SK-N-SH (cell line): ENCODE measurements at regions of chr9 and their contacts with region 1.

Region 1: GRCh38 chr9:36450110-36450732 is 50.2 kb upstream of the RNF38 start:
- DNase-seq: peak; percentile 53
- H3K4me3 ChIP-seq: no peak overlapping the region
- H3K27ac ChIP-seq: no peak overlapping the region
- H3K4me1 ChIP-seq: no peaks in the 10 kb centered on the region
- H3K27me3 ChIP-seq: no peaks in the 10 kb centered on the region
- CTCF ChIP-seq: peak; percentile 90
- EP300 ChIP-seq: no peak
- RAD21 ChIP-seq: peak; percentile 83

Region 2: DNA sequence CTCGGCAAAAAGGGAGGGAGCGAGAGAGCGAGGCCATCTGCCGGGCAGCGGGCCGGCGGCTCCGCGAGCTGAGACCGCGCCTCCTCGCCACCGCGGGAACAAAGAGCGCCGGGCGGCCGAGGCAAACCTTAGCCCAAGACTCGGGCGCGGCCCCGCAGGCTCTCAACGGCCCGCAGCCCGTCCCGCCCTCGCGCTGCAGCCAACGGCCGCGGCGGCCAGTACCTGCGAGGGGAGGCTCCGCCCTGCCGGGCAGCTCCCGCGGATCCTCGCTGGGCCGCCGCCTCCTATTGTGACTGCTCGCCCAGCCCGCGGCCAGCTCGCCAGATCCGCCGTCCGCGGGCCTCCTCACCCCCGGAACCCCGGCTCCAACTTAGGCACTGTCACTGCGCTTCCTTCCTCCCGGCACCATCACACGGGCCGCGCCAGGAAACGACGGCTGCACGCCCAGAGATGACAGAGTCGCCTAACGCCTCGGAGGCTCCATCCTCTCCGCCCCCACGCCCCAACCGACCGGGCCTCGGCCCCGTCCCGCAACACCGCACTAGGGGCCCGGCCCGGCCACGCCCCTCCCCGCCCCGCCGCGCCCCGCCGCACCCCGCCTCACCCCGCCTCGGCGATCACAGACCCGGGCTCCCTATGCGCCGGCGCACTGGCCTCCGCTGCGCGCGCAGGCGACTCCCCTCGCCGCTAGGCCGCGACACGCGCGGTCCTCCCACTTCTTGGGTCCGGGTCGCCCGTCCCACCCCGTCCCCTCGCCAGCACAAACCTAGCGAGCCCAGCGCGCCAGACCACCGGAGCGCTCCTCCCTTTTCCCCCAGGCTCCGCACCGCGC is 49.7 kb before region 1 on chr9:
- CTCF ChIA-PET with region 1: interaction called, 135 read pairs
- POLR2A ChIA-PET with region 1: no interaction called
- DNase-seq: peak; percentile 99
- H3K4me3 ChIP-seq: peak overlapping the region; percentile 77 to 84
- H3K27ac ChIP-seq: peak overlapping the region; percentile 84 to 93
- H3K4me1 ChIP-seq: peaks cover 4 to 9% of the 10 kb centered on the region in 2 experiments; a peak in 2 of 4 replicates
- H3K27me3 ChIP-seq: no peaks in the 10 kb centered on the region
- CTCF ChIP-seq: no peak
- EP300 ChIP-seq: no peak; a peak in 1 of 4 replicates
- RAD21 ChIP-seq: no peak

Region 3: DNA sequence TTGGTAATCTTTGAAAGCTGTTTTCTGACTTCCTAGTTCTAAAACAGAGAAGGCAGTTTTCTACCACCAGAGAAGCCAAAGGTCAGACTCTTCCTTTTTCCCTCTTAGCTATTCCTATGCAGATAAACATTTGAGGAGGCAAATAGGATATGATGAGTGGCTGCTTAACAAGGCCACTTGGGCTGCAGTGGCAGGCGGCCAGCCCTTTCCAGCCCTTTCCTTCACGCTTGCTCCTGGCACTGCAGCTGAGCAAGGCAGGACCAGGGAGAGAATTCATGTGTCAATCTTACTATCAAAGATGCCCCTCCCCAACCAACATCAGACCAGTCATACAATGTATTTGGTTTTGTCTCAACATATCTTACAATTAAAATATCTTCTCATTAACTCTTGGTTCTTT is 13.3 kb before region 1 on chr9:
- CTCF ChIA-PET with region 1: interaction called, 28 read pairs
- POLR2A ChIA-PET with region 1: no interaction called
- DNase-seq: no peak
- H3K4me3 ChIP-seq: no peak overlapping the region
- H3K27ac ChIP-seq: no peak overlapping the region; a peak in 1 of 4 replicates
- H3K4me1 ChIP-seq: peaks cover under 1 to 2% of the 10 kb centered on the region in 2 experiments; a peak in 2 of 4 replicates
- H3K27me3 ChIP-seq: no peaks in the 10 kb centered on the region
- CTCF ChIP-seq: no peak
- EP300 ChIP-seq: no peak
- RAD21 ChIP-seq: no peak

Region 4: DNA sequence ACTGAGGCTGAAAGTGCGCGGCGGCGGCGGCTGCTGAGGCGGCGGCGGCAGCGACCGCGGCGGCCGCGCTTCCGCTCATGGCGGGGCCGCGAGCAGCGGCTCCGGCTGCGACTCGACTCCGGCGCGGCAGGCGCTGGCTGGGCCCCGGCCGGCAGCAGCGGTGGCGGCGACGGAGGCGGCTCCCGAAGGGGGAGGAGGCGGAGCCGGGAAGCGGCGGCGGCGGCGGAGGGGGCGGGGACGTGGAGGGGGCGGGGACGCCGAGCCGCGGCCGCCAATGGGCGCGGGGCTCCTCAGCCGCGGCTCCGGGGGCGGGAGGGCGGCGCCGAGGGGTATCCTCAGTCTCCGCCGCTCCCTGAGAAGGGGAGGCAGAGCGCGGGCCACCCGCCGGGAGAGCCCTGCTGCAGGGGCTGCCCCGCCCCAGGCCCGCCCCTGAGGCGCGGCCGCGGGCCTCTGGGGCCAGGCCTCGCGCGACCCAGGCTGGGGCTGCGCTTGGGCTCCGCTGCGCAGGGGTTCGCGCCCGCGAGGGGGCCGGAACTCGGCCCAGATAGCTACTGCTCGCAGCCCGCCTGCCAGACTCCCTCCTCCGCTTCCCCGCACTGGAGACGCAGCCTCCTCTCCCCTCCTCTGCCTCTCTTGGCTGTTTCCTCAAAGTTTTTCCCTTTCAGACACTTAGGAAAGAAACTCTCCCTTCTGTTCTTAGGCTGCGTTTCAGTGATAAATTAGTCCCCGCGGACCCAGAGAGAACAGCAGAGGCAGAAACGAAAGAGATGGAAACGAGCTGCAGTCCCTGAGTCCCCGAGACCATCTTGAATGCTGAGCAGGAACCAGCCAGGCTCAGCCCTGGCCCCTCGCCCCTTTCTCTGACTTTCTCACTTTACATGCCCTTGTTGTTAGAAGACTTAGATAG is 37.5 kb after region 1 on chr9:
- CTCF ChIA-PET with region 1: interaction called, 13 read pairs
- POLR2A ChIA-PET with region 1: no interaction called
- DNase-seq: peak; percentile 96
- H3K4me3 ChIP-seq: peak overlapping the region; percentile 62 to 96
- H3K27ac ChIP-seq: peak overlapping the region; percentile 88 to 91
- H3K4me1 ChIP-seq: peaks cover 12 to 16% of the 10 kb centered on the region in 2 experiments; a peak in 3 of 4 replicates
- H3K27me3 ChIP-seq: no peaks in the 10 kb centered on the region
- CTCF ChIP-seq: no peak
- EP300 ChIP-seq: no peak
- RAD21 ChIP-seq: no peak

Region 5: DNA sequence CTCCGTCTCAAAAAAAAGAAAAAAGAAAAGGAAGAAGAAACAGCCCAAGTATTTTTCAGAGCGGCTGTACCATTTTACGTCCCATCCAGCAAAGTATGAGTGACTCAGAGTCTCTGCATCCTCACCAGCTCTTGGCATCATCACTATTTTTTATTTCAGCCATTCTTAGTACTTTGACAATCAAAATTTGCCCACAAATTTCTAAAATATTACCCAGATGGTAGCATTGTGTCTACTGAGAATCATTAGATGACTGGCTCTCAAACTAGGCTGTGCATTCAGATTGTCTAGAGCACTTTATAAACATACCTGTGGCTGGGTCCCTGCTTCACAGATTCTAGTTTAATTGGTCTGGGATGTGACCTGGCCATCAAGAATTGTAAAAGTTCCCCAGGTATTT is 100.9 kb after region 1 on chr9:
- CTCF ChIA-PET with region 1: interaction called, 27 read pairs
- POLR2A ChIA-PET with region 1: no interaction called
- DNase-seq: no peak
- H3K4me3 ChIP-seq: no peak overlapping the region
- H3K27ac ChIP-seq: peak overlapping the region in 1 of 2 experiments; percentile 37; a peak in 2 of 4 replicates
- H3K4me1 ChIP-seq: no peaks in the 10 kb centered on the region
- H3K27me3 ChIP-seq: 0 out of 2 replicates have a peak, but pooled peaks cover 8% of the 10 kb centered on the region
- CTCF ChIP-seq: no peak
- EP300 ChIP-seq: no peak
- RAD21 ChIP-seq: no peak

Region 6: DNA sequence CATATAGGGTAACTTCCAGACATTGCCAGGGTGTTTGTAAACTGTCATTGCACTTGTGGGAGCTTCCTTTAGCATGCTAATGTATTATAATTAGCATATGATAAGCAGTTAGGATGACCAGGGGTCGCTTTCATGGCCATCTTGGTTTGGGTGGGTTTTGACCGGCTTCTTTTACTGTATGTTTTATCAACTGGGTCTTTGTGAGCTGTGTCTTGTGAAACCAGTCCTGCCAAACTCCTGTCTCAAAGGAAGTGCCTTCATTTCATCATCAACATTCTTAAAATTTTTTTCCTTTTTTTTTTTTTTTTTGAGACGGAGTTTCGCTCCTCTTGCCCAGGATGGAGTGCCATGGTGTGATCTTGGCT is 110.6 kb after region 1 on chr9:
- CTCF ChIA-PET with region 1: interaction called, 27 read pairs
- POLR2A ChIA-PET with region 1: no interaction called
- DNase-seq: no peak
- H3K4me3 ChIP-seq: no peak overlapping the region
- H3K27ac ChIP-seq: no peak overlapping the region
- H3K4me1 ChIP-seq: no peaks in the 10 kb centered on the region
- H3K27me3 ChIP-seq: no peaks in the 10 kb centered on the region
- CTCF ChIP-seq: no peak
- EP300 ChIP-seq: no peak
- RAD21 ChIP-seq: no peak

Region 7: GRCh38 chr9:36828611-36829013 is 378.4 kb after region 1 on chr9:
- CTCF ChIA-PET with region 1: no interaction called
- POLR2A ChIA-PET with region 1: no interaction called
- DNase-seq: no peak
- H3K4me3 ChIP-seq: no peak overlapping the region
- H3K27ac ChIP-seq: no peak overlapping the region
- H3K4me1 ChIP-seq: no peaks in the 10 kb centered on the region; a peak in 1 of 4 replicates
- H3K27me3 ChIP-seq: peaks cover 27% of the 10 kb centered on the region; the same call in 1 of the 2 replicates
- CTCF ChIP-seq: no peak
- EP300 ChIP-seq: no peak
- RAD21 ChIP-seq: no peak